Mammary epithelial cell (primary cell): ENCODE measurements at regions of chr4 and their contacts with region 1.

Region 1: GRCh38 chr4:7206911-7207567 is 14.7 kb downstream of the SORCS2 start:
- DNase-seq: peak; percentile 78
- H3K4me3 ChIP-seq: no peak overlapping the region
- H3K27ac ChIP-seq: peak overlapping the region; percentile 3
- H3K4me1 ChIP-seq: peaks cover 30% of the 10 kb centered on the region
- H3K27me3 ChIP-seq: no peaks in the 10 kb centered on the region
- CTCF ChIP-seq: no peak

Region 2: DNA sequence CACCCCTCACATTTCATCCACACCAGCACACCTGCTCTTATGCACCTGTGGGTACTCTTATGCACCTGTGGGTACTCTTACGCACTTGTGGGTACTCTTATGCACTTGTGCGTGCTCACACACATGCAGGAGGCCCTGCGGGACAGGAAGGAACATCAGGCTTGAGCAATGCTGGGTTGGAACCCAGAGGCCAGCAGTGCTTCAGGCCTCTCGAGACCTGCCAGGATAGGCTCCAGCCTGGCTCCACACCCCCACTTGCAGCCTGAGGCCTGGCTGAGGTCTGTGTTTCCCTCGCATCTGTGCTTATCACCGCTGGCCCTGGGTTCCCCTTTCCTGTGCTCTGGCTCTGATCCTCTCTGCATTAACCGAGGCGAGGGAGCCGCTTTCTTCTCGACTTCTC is 20.0 kb after region 1 on chr4:
- CTCF ChIA-PET with region 1: no interaction called
- dilution Hi-C with region 1: no loop called
- in situ Hi-C with region 1: no loop called
- intact Hi-C with region 1: loop called (anchors 1 kb)
- DNase-seq: no peak
- H3K4me3 ChIP-seq: no peak overlapping the region
- H3K27ac ChIP-seq: no peak overlapping the region
- H3K4me1 ChIP-seq: no peaks in the 10 kb centered on the region
- H3K27me3 ChIP-seq: no peaks in the 10 kb centered on the region
- CTCF ChIP-seq: no peak

Region 3: DNA sequence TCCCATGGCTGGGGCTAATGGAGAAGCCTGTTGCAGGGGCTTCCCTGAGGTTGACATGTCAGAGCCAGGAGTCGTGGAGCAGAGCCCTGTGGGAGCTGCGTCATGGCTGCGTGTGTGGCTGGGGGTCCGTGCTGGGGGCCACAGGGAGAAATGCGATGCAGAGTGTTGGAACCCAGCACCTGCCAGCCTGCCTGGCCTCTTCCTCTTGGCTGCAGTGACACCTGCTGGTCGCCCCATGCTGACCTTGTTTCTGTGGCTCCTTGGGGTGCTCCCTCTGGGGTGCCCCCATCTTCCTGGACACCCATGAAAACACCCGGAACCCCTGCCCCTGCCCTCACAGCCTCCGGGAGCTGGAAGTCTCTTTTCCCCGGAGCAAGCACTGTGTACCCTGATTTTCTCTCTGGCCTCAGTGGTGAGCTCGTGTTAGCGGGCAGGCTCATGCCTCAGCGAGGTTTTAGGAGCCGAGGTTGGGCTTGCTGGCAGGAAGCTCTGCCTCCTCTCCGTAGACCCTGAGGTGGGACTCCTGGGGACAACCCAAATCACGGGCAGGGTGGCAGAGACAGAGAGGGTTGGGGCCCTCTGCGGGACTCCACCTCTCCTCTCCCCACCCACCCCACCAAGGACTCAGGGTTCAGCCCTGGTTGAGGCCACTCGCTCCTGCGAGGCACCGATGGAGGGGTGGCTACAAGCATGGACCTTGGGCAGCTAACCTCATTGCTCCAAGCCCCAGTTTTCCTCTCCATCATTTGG is 89.0 kb after region 1 on chr4:
- CTCF ChIA-PET with region 1: no interaction called
- dilution Hi-C with region 1: no loop called
- in situ Hi-C with region 1: loop called in 1 of 2 experiments (anchors 10 kb)
- intact Hi-C with region 1: no loop called
- DNase-seq: peak; percentile 19
- H3K4me3 ChIP-seq: no peak overlapping the region
- H3K27ac ChIP-seq: no peak overlapping the region
- H3K4me1 ChIP-seq: no peaks in the 10 kb centered on the region
- H3K27me3 ChIP-seq: no peaks in the 10 kb centered on the region
- CTCF ChIP-seq: peak; percentile 54 to 80